Head of caudate nucleus (tissue), 42 donors: ENCODE measurements at regions of chr12 and their contacts with region 1.

Region 1: DNA sequence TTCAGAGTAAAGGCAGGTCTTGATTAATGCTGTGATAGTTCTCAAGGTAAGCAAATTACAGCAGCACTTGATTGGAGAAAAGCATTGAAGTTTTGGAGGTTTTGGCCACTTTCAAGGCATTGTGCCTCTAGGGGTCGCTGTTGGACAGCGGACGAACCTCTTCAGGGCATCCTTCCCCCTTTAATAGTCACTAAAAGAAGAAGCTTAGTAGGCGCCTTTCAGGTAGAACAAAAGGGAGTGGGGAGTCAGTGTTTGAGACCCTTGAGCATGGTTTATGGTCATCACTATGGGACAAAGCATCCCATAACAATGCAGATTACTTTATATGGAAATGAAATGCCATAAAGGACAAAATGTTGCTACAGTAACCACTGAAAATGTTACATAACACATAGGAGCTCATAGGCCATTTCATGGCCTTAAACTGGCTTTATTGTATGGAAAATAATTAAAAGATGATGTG is 199.5 kb upstream of the DCN start:
- DNase-seq: peak; percentile 71 to 97 (median 92)

Region 2: DNA sequence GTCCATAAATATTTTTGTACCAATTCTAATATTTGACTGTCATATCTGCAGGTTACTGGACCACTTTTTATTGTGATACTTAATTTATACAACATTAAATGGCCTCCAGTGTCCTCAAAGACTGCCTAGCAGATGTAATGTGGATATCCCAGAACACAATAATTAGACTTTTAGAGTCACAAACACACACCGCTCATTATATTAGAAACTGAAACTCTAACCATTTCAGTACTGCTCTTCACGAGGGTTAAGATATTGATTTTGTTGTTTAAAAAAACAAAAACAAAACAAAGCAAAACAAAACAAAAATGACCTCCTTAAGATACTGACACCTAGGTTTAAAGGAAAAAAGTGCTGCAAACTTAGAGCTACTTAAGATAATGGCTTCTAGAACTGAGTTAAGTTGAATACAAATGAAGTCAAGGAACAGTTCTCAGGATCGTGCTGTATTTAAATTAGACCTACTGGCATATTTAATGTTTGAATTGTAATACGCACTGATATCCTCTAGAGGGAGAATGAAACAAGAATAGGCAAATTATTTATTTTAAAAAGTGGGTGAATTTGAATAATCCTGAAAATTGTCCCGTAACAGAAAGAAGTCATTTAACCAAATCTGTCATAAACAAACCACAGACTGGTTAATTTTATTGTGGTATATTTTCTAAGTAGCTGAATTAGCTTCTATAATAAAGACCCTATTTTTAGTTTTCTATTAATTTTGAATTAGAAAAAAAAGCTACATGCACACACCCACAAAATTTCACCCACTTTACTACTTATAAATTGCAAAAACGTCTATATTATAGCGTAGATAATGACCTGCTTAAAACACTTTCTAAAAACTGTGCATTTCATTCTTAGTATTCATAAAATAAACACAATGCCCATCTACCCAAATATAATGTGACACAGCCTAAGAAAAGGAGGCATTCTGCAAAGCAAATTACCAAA is 195.8 kb after region 1 on chr12:
- intact Hi-C with region 1: loop called (anchors 10 kb)
- DNase-seq: no peak

Region 3: DNA sequence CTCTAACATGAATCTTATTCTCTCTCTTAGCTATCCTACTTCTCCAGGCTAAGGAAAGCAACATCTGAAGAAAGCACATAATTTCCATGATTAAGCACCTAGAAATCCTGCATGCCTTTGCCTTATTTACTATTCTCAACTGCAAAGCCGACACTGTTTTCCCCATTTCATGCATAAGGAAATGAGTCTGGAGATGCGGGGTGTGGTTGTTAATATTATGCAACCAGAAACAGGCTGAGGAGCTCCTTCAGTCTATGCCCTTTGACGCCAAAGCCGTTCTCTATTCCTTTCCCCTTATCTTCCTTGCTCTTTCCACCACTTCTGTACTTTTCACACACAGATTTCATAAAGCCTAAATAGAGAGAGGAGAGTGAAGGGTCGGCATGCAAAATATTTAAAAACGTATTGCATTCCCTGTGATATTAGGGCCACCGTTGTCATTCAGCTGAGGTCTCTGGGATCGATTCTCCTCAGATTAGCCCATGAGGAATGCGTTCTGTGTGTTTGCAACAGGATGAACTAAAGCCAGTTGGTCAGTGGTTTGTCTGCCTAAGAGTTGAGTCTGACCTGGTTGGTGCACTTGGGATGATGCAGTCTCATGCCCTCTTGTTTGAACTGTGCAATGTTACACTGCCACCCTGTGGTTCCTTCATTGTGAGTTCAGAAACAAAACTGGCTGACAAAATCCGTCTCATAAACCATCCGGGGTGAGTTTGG is 1267.6 kb after region 1 on chr12:
- intact Hi-C with region 1: loop called (anchors 5 kb)
- DNase-seq: peak in 39 of 42 donors; percentile 19 to 85 (median 67)